T-cell (primary cell): ENCODE measurements at regions of chr12 and their contacts with region 1.

Region 1: DNA sequence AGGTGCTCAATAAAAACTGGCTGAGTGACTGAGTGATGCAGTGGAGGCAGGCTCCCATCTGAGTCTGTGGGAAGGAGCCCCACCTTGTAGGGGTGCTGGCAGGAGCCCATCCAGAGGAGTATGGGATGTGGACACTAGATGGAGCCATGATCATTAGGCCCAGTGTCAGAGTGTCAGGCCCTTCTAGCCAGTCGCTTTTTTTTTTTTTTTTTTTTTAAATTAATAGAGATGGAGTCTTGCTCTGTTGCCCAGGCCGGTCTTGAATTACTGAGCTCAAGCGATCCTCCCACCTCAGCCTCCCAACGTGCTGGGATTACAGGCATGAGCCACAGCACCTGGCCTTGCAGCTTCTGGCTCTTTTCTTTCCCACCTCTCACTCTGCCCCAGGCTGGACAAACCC is 11.5 kb downstream of the RITA1 start:
- DNase-seq: peak in 31 of 35 experiments; percentile 21 to 80 (median 42)
- ATAC-seq: peak; percentile 87 to 99 (median 92)
- H3K4me3 ChIP-seq: no peak overlapping the region
- H3K4me3 Mint-ChIP-seq: no peak overlapping the region
- H3K27ac ChIP-seq: no peak overlapping the region
- H3K27ac Mint-ChIP-seq: no peak overlapping the region
- H3K4me1 ChIP-seq: no peaks in the 10 kb centered on the region
- H3K4me1 Mint-ChIP-seq: peaks cover 0 to 5% (median 3%) of the 10 kb centered on the region in 3 donors
- H3K27me3 ChIP-seq: no peaks in the 10 kb centered on the region
- H3K27me3 Mint-ChIP-seq: no peaks in the 10 kb centered on the region

Region 2: GRCh38 chr12:113174461-113175384 is 22.3 kb before region 1 on chr12:
- CTCF ChIA-PET with region 1: no interaction called
- POLR2A ChIA-PET with region 1: no interaction called
- DNase-seq: peak in 34 of 35 experiments; percentile 27 to 84 (median 64)
- ATAC-seq: peak; percentile 78 to 87 (median 84)
- H3K4me3 ChIP-seq: no peak overlapping the region
- H3K4me3 Mint-ChIP-seq: no peak overlapping the region
- H3K27ac ChIP-seq: no peak overlapping the region
- H3K27ac Mint-ChIP-seq: no peak overlapping the region
- H3K4me1 ChIP-seq: peaks cover 0 to 7% of the 10 kb centered on the region in 2 experiments
- H3K4me1 Mint-ChIP-seq: peaks cover 3 to 7% (median 5%) of the 10 kb centered on the region in 3 donors
- H3K27me3 ChIP-seq: no peaks in the 10 kb centered on the region
- H3K27me3 Mint-ChIP-seq: no peaks in the 10 kb centered on the region

Region 3: GRCh38 chr12:113184900-113185773 is 11.9 kb before region 1 on chr12 and contains the starts of genes DDX54 and RITA1:
- CTCF ChIA-PET with region 1: interaction called, 3 to 11 read pairs
- POLR2A ChIA-PET with region 1: no interaction called
- DNase-seq: peak; percentile 74 to 92 (median 83)
- ATAC-seq: peak; percentile 85 to 86 (median 85)
- H3K4me3 ChIP-seq: peak within 1 kb of the TSS; percentile 80 to 99
- H3K4me3 Mint-ChIP-seq: peak within 1 kb of the TSS; percentile 90 to 95 (median 94)
- H3K27ac ChIP-seq: peak within 1 kb of the TSS; percentile 95
- H3K27ac Mint-ChIP-seq: peak within 1 kb of the TSS; percentile 94 to 95
- H3K4me1 ChIP-seq: peaks cover 11 to 47% of the 10 kb centered on the region in 2 experiments
- H3K4me1 Mint-ChIP-seq: peaks cover 31 to 53% (median 43%) of the 10 kb centered on the region in 3 donors
- H3K27me3 ChIP-seq: peaks cover 0 to 2% of the 10 kb centered on the region in 2 experiments
- H3K27me3 Mint-ChIP-seq: no peaks in the 10 kb centered on the region
- total RNA-seq, gene DDX54: 86.1 to 100.0 (median 88.0) TPM
- total RNA-seq, gene RITA1: 7.8 to 17.8 (median 13.8) TPM

Region 4: GRCh38 chr12:113221181-113221997 is 24.4 kb after region 1 on chr12 and contains the start of gene TPCN1:
- CTCF ChIA-PET with region 1: interaction called, 8 to 11 read pairs
- POLR2A ChIA-PET with region 1: interaction called, 3 to 21 read pairs
- DNase-seq: peak; percentile 95 to 100 (median 98)
- ATAC-seq: peak; percentile 93 to 95 (median 94)
- H3K4me3 ChIP-seq: peak within 1 kb of the TSS; percentile 82 to 97
- H3K4me3 Mint-ChIP-seq: peak within 1 kb of the TSS; percentile 89 to 90 (median 89)
- H3K27ac ChIP-seq: peak within 1 kb of the TSS; percentile 55
- H3K27ac Mint-ChIP-seq: peak within 1 kb of the TSS; percentile 88 to 93
- H3K4me1 ChIP-seq: peaks cover 34 to 38% of the 10 kb centered on the region in 2 experiments
- H3K4me1 Mint-ChIP-seq: peaks cover 37 to 47% (median 43%) of the 10 kb centered on the region in 3 donors
- H3K27me3 ChIP-seq: no peaks in the 10 kb centered on the region
- H3K27me3 Mint-ChIP-seq: no peaks in the 10 kb centered on the region
- total RNA-seq, gene TPCN1: 58.8 to 81.6 (median 73.5) TPM

Region 5: GRCh38 chr12:113293100-113293499 is 96.1 kb after region 1 on chr12:
- CTCF ChIA-PET with region 1: no interaction called
- POLR2A ChIA-PET with region 1: interaction called in 1 of 2 experiments, 13 read pairs
- DNase-seq: no peak
- ATAC-seq: no peak
- H3K4me3 ChIP-seq: no peak overlapping the region
- H3K4me3 Mint-ChIP-seq: no peak overlapping the region
- H3K27ac ChIP-seq: no peak overlapping the region
- H3K27ac Mint-ChIP-seq: no peak overlapping the region
- H3K4me1 ChIP-seq: no peaks in the 10 kb centered on the region
- H3K4me1 Mint-ChIP-seq: no peaks in the 10 kb centered on the region
- H3K27me3 ChIP-seq: no peaks in the 10 kb centered on the region
- H3K27me3 Mint-ChIP-seq: no peaks in the 10 kb centered on the region